Activated CD4-positive, alpha-beta memory T cell treated with anti-CD3 and anti-CD28 coated beads for 36 hours (primary cell): ENCODE measurements at regions of chr17 and their contacts with region 1.

Region 1: GRCh38 chr17:57849874-57850754 is at the start of gene MRPS23:
- DNase-seq: peak; percentile 99
- H3K4me3 Mint-ChIP-seq: peak within 1 kb of the TSS; percentile 98
- H3K27ac Mint-ChIP-seq: peak within 1 kb of the TSS; percentile 98
- H3K4me1 Mint-ChIP-seq: peaks cover 34% of the 10 kb centered on the region
- H3K27me3 Mint-ChIP-seq: no peaks in the 10 kb centered on the region
- total RNA-seq, gene MRPS23: 58.2 to 64.1 TPM

Region 2: DNA sequence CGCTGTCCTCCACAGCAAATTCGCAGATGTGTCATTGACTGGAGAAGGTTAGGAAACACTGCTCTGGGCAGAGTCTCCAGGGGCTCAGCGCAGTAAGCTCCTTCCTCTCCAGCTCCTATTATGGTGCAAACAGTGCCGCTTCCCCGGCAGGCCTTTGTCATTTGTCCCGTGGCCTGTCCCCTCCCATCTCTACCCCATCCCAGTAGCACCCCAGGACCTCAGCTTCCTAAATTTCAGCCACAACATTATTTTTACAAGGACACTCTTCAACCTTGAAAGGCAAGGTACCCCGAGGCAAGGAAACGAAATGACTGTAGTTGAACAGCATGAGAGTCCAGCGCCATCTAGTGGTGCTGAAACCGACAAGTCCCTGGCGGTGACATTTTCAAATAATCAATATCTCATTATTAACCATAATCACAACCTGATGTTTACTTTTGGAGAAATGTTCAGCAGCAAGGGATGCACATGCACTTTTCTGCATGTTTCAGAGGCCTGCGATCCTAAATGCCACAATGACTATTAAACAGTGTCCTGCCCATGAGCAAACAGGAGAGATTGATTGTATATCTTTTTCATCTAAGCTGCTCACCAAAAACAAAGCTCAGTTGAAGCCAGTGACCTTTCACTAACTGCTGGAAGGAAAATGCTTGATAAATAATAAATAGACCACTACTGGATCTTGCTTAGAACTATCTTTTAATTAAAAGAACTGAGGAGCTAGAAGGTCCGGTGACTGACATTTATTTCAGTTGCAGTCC is 16.8 kb before region 1 on chr17:
- CTCF ChIA-PET with region 1: interaction called, 11 read pairs
- POLR2A ChIA-PET with region 1: interaction called, 3 read pairs
- intact Hi-C with region 1: no loop called
- DNase-seq: peak; percentile 73
- H3K4me3 Mint-ChIP-seq: no peak overlapping the region
- H3K27ac Mint-ChIP-seq: no peak overlapping the region
- H3K4me1 Mint-ChIP-seq: peaks cover 6% of the 10 kb centered on the region
- H3K27me3 Mint-ChIP-seq: no peaks in the 10 kb centered on the region

Region 3: GRCh38 chr17:57879463-57880433 is 29.6 kb after region 1 on chr17:
- CTCF ChIA-PET with region 1: no interaction called
- POLR2A ChIA-PET with region 1: interaction called, 3 read pairs
- intact Hi-C with region 1: loop called (anchors 2 kb)
- DNase-seq: peak; percentile 57
- H3K4me3 Mint-ChIP-seq: no peak overlapping the region
- H3K27ac Mint-ChIP-seq: peak overlapping the region; percentile 35
- H3K4me1 Mint-ChIP-seq: peaks cover 31% of the 10 kb centered on the region
- H3K27me3 Mint-ChIP-seq: peaks cover 13% of the 10 kb centered on the region

Region 4: DNA sequence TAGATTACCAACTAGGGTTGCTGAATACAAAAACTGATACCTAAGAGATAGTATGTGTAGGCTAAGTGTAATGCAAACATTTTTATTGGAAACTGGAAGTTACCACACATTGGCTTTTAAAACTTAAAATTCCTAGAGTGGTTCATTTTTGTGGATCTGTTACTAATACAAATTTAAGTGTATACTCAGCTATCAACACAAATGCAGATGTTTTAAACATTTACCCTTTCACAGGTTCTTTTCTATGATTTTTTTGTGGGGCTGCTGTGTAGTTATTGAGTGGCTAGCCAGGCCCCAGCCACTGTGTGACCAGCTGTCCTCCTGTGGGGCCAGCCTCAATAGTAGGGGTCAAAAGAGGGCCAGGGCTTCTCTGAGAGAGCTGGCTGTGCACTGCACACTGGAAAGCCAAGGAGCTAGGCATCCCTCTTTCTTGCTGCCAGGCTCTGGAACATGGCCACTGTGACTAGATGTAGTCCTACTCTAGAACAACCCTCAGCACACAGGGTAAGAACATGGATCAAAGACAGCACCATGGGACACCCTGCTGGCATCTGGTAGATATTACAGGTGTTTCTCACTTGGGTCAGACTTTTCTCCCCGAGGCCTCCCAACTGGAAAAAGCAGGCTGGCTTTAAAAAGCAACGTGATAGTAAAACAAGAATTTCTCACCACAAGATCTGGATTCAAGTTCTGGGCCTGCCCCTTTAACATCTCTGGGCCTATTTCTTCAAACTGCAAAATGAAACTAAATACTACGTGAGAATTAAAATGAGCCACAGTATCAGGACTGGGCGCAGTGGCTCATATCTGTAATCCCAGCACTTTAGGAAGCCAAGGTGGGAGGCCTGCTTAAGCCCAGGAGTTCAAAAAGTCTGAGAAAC is 145.2 kb after region 1 on chr17:
- CTCF ChIA-PET with region 1: interaction called, 170 read pairs
- POLR2A ChIA-PET with region 1: interaction called, 7 read pairs
- intact Hi-C with region 1: loop called (anchors 2 kb)
- DNase-seq: peak; percentile 76
- H3K4me3 Mint-ChIP-seq: no peak overlapping the region
- H3K27ac Mint-ChIP-seq: peak overlapping the region; percentile 47
- H3K4me1 Mint-ChIP-seq: peaks cover 69% of the 10 kb centered on the region
- H3K27me3 Mint-ChIP-seq: no peaks in the 10 kb centered on the region

Region 5: GRCh38 chr17:58082870-58083490 is 232.9 kb after region 1 on chr17 and contains the start of gene DYNLL2:
- CTCF ChIA-PET with region 1: no interaction called
- POLR2A ChIA-PET with region 1: no interaction called
- intact Hi-C with region 1: loop called (anchors 10 kb)
- DNase-seq: peak; percentile 94
- H3K4me3 Mint-ChIP-seq: peak within 1 kb of the TSS; percentile 84
- H3K27ac Mint-ChIP-seq: peak within 1 kb of the TSS; percentile 81
- H3K4me1 Mint-ChIP-seq: peaks cover 33% of the 10 kb centered on the region
- H3K27me3 Mint-ChIP-seq: no peaks in the 10 kb centered on the region
- total RNA-seq, gene DYNLL2: 24.8 to 26.8 TPM

Region 6: GRCh38 chr17:58219001-58219788 is 369.1 kb after region 1 on chr17 and contains the start of gene MKS1:
- CTCF ChIA-PET with region 1: no interaction called
- POLR2A ChIA-PET with region 1: no interaction called
- intact Hi-C with region 1: loop called (anchors 1 kb)
- DNase-seq: peak; percentile 98
- H3K4me3 Mint-ChIP-seq: peak within 1 kb of the TSS; percentile 95
- H3K27ac Mint-ChIP-seq: peak within 1 kb of the TSS; percentile 93
- H3K4me1 Mint-ChIP-seq: peaks cover 23% of the 10 kb centered on the region
- H3K27me3 Mint-ChIP-seq: no peaks in the 10 kb centered on the region
- total RNA-seq, gene MKS1: 23.5 to 27.3 TPM